Aorta (tissue), 5 donors: ENCODE measurements at regions of chr1 and their contacts with region 1.

Region 1: DNA sequence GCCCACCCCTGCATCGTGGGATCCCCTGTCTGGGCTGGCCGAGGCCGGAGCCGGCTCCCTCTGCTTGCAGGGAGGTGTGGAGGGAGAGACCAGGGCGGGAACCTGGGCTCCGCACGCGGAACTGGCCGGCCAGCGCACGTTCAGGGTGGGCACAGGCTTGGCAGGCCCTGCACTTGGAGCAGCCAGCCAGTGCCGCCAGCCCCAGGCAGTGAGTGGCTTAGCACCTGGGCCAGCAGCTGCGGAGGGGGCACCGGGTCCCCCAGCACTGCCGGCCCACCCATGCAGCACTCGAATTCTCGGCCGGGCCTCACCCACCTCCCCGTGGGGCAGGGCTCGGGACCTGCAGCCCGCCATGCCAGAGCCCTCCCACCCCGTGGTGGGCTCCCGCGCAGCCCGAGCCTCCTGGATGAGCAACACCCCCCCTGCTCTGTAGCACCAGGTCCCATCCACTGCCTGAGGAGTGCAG is 422.6 kb downstream of the AMY1C start:
- DNase-seq: peak in 1 of 2 donors; percentile 55
- ATAC-seq: no peak
- H3K4me3 ChIP-seq: no peak overlapping the region
- H3K27ac ChIP-seq: no peak overlapping the region
- H3K4me1 ChIP-seq: no peaks in the 10 kb centered on the region
- H3K27me3 ChIP-seq: no peaks in the 10 kb centered on the region

Region 2: DNA sequence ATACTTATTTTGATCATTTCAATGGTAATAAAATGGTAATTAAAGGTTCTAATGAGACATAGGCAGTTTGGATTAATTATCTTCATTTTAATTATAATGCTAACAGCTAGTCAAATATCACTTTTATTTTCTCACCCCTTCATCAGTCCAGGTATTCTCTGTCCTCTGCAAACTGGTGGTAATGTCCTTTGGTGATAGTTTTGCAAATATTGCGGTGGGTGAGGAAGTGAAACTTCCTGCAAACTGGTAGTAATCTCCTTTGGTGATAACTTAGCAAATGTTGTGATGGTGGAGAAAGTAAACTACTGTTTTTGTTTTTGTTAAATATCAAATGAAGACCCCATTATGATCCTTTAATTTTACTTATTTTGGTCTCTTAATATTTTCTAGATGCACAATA is 213.6 kb before region 1 on chr1:
- intact Hi-C with region 1: no loop called
- DNase-seq: no peak
- ATAC-seq: no peak
- H3K4me3 ChIP-seq: no peak overlapping the region
- H3K27ac ChIP-seq: no peak overlapping the region
- H3K4me1 ChIP-seq: no peaks in the 10 kb centered on the region
- H3K27me3 ChIP-seq: no peaks in the 10 kb centered on the region

Region 3: GRCh38 chr1:104229860-104230259 is 57.6 kb after region 1 on chr1:
- intact Hi-C with region 1: no loop called
- DNase-seq: no peak
- ATAC-seq: no peak
- H3K4me3 ChIP-seq: no peak overlapping the region
- H3K27ac ChIP-seq: no peak overlapping the region
- H3K4me1 ChIP-seq: no peaks in the 10 kb centered on the region
- H3K27me3 ChIP-seq: no peaks in the 10 kb centered on the region

Region 4: GRCh38 chr1:104248385-104248784 is 76.1 kb after region 1 on chr1:
- intact Hi-C with region 1: loop called in 1 of 2 experiments (anchors 5 kb)
- DNase-seq: no peak
- ATAC-seq: no peak
- H3K4me3 ChIP-seq: no peak overlapping the region
- H3K27ac ChIP-seq: no peak overlapping the region
- H3K4me1 ChIP-seq: no peaks in the 10 kb centered on the region
- H3K27me3 ChIP-seq: no peaks in the 10 kb centered on the region

Region 5: DNA sequence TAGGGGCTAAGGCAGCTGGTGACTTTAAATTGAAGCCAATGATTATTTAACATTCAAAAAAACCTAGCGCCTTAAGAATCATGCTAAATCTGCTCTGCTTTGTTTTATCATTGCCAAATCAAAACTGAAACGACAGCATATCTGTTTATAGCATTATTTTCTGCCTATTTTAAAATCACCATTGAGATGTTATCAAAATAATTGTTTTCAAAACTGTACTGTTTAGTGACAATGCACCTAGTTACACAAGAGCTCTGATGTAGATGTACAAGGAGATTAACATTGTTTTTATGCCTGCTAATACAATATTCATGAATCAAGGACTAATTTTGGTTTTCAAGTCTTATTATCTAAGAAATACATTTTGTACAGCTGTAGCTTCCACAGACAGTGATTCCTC is 1098.7 kb after region 1 on chr1:
- intact Hi-C with region 1: no loop called
- DNase-seq: no peak
- ATAC-seq: no peak
- H3K4me3 ChIP-seq: no peak overlapping the region
- H3K27ac ChIP-seq: no peak overlapping the region
- H3K4me1 ChIP-seq: no peaks in the 10 kb centered on the region
- H3K27me3 ChIP-seq: no peaks in the 10 kb centered on the region